Activated naive CD4-positive, alpha-beta T cell treated with anti-CD3 and anti-CD28 coated beads, Interleukin-2, amount 10 ng/mL, durations not matched to agents 7 days and 5 days (primary cell): ENCODE measurements at regions of chr1 and their contacts with region 1.

Region 1: DNA sequence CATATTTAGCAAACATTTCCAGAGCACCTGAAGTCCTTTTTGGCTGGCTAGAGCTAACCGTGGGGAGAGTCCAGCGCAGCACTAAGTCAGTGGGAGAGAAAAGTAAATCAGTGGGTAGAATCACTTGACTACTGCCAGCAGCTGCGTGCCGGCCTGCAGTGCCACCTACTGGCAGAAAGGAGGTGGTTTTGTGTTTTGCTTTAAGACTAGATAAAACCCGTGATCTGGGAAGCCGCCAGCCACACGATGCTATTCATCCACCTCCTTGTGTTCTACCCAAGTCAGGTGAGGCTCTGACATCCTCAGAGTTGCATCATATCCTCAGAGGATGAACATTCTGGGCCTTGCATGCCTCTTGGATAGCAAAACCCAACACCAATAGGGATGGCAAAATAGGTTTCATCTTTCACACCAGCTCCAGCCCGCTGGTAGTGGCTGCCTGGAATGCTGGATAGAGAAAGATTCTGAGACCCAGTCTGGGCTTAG is 14.1 kb upstream of the HEYL start:
- DNase-seq: peak; percentile 84
- H3K4me3 Mint-ChIP-seq: no peak overlapping the region
- H3K27ac Mint-ChIP-seq: no peak overlapping the region
- H3K4me1 Mint-ChIP-seq: peaks cover 9% of the 10 kb centered on the region
- H3K27me3 Mint-ChIP-seq: peaks cover 36% of the 10 kb centered on the region

Region 2: GRCh38 chr1:39609618-39610331 is 43.8 kb before region 1 on chr1:
- CTCF ChIA-PET with region 1: interaction called, 126 read pairs
- DNase-seq: peak; percentile 74
- H3K4me3 Mint-ChIP-seq: no peak overlapping the region
- H3K27ac Mint-ChIP-seq: no peak overlapping the region
- H3K4me1 Mint-ChIP-seq: peaks cover 8% of the 10 kb centered on the region
- H3K27me3 Mint-ChIP-seq: peaks cover 35% of the 10 kb centered on the region

Region 3: GRCh38 chr1:39672551-39672947 is 19.0 kb after region 1 on chr1:
- CTCF ChIA-PET with region 1: interaction called, 115 read pairs
- DNase-seq: peak; percentile 55
- H3K4me3 Mint-ChIP-seq: no peak overlapping the region
- H3K27ac Mint-ChIP-seq: no peak overlapping the region
- H3K4me1 Mint-ChIP-seq: peaks cover 4% of the 10 kb centered on the region
- H3K27me3 Mint-ChIP-seq: peaks cover 66% of the 10 kb centered on the region

Region 4: DNA sequence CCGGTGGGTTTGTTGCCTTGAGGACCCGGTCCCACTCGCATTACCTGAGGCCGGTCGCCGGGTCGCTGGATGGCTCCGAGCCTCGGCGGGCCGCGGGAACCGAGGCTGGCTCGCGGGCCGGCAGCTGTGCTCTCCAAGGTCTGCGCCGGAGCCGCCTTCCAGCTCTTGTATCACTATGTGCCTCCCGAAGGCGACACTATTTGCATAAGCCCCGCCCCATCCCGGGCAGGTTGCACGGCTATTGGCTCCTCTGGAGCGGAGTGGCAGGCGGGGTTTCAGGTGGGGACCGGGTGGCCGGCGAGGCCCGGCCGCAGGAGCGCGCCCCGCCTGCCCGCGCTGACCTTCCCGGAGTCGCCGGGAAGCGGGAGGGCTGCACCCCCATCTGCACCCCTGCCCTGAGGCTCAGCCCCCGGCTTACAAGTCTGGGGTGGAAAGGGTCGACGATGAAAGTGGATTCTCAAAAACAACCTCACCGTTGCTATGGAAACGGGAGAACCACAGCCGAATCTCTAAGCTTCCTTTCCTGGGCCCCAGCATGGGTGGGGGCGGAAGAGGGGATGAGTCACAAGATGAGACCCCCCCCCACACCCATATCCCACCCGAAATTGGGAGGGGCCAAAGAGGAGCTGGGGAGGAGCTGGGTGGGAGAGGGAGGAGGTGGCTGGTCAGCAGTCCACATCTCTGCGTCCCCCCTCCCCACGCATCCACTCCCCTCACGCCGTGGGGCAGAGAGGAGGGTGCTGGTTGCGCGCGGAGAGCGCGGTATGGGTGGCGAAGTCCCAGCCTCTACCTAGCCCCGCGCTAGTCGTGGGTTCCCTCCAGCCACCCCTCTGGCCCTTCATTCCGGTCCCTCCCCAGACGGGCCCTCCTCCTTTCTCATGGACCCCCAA is 37.9 kb after region 1 on chr1 and contains the start of gene HPCAL4:
- CTCF ChIA-PET with region 1: interaction called, 18 read pairs
- DNase-seq: peak; percentile 93
- H3K4me3 Mint-ChIP-seq: peak within 1 kb of the TSS; percentile 77
- H3K27ac Mint-ChIP-seq: no peak within 1 kb of the TSS
- H3K4me1 Mint-ChIP-seq: peaks cover 30% of the 10 kb centered on the region
- H3K27me3 Mint-ChIP-seq: peaks cover 91% of the 10 kb centered on the region